ENCODE measurements at regions of chr10 and their contacts with region 1.

Region 1: GRCh38 chr10:98467506-98468346 is 21.0 kb upstream of the HPS1 start:
- DNase-seq: peak; percentile 48 to 91
- ATAC-seq: peak; percentile 93 to 97 (median 97)
- H3K4me3 ChIP-seq: peak overlapping the region; percentile 85
- H3K4me3 Mint-ChIP-seq: peak overlapping the region; percentile 97
- H3K27ac ChIP-seq: peak overlapping the region; percentile 34
- H3K27ac Mint-ChIP-seq: peak overlapping the region; percentile 68 to 87
- H3K4me1 ChIP-seq: peaks cover 11% of the 10 kb centered on the region
- H3K4me1 Mint-ChIP-seq: peaks cover 8 to 15% of the 10 kb centered on the region in 2 donors
- H3K27me3 ChIP-seq: no peaks in the 10 kb centered on the region
- H3K27me3 Mint-ChIP-seq: peaks cover 13 to 14% of the 10 kb centered on the region in 2 donors
- CTCF ChIP-seq: peak; percentile 87

Region 2: GRCh38 chr10:98664331-98665042 is 196.8 kb after region 1 on chr10:
- intact Hi-C with region 1: loop called (anchors 1 kb)
- DNase-seq: peak; percentile 16 to 68
- ATAC-seq: peak; percentile 54 to 73 (median 64)
- H3K4me3 ChIP-seq: no peak overlapping the region
- H3K4me3 Mint-ChIP-seq: no peak overlapping the region
- H3K27ac ChIP-seq: no peak overlapping the region
- H3K27ac Mint-ChIP-seq: no peak overlapping the region
- H3K4me1 ChIP-seq: no peaks in the 10 kb centered on the region
- H3K4me1 Mint-ChIP-seq: no peaks in the 10 kb centered on the region
- H3K27me3 ChIP-seq: peaks cover 4% of the 10 kb centered on the region
- H3K27me3 Mint-ChIP-seq: peaks cover 14 to 36% of the 10 kb centered on the region in 2 donors
- CTCF ChIP-seq: peak; percentile 64